ENCODE measurements at regions of chr5 and their contacts with region 1.

Region 1: DNA sequence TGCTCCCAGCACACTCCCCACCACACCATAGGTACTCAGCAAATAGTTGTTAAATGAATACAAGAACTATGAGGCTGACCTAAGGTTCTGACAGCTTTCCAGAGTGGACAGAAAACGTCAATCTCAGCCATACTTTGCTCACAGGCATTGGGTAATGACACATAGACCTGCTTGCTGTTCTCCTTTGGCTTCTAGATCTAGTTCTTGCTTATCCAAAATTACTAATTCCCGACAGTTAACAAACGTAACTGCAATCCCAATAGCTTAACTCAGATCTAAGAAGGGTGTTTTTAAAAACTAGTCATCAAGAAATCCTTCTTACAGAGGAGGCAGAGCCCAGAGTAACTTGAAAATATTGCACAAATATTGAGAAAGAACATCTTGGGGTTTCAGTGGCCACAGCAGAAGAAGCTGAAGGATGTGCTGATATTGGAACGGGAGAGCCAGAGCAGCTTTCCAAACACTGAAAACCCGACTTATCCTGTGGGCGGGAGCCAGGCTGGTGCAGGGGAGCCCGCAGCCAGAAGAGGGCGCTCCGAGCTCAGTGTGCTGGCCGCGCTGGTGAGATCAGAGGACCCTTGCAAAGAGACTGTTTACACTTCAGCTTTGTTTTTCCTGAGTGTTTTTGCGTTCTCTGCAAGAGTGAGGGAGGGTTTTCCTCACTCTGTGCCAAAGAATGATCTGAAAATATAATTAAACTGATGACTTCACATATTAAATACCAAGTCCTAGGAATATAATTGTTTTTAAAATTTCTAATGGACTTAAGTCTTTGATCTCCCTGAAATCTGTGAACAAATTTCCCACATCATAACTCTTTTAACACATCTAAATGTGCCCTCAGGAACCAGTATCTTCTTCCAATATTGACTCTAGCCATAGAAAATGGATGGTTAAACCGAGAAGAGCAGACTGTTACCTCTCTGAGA is 30.3 kb downstream of the FGF1 start:
- DNase-seq: peak; percentile 81
- ATAC-seq: peak; percentile 93
- H3K4me3 Mint-ChIP-seq: no peak overlapping the region
- H3K27ac Mint-ChIP-seq: no peak overlapping the region
- H3K4me1 Mint-ChIP-seq: no peaks in the 10 kb centered on the region
- H3K27me3 Mint-ChIP-seq: peaks cover 12% of the 10 kb centered on the region
- CTCF ChIP-seq: peak; percentile 97

Region 2: DNA sequence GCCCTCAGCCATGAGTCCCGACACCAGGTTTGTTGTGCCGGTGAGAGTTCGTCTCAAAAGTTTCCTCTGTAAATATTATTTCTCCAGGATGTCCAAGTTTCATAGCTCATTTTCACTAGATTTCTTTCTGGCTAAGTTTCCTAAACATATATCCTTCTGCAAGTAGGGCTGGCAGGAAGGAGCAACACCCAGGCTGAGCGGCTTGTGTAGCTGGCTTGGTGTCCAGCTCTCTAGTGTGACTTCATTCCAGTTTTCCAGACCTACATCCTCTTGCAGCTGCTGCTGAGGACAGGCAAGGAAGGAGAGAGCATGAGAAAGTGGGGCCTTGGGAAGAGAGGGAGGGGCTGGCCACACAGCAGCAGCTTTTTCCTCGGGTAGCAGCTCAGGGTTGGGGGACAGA is 50.0 kb before region 1 on chr5:
- CTCF ChIA-PET with region 1: interaction called, 36 read pairs
- POLR2A ChIA-PET with region 1: interaction called, 3 read pairs
- intact Hi-C with region 1: no loop called
- DNase-seq: no peak
- ATAC-seq: no peak
- H3K4me3 Mint-ChIP-seq: no peak overlapping the region
- H3K27ac Mint-ChIP-seq: no peak overlapping the region
- H3K4me1 Mint-ChIP-seq: no peaks in the 10 kb centered on the region
- H3K27me3 Mint-ChIP-seq: peaks cover 13% of the 10 kb centered on the region
- CTCF ChIP-seq: no peak

Region 3: DNA sequence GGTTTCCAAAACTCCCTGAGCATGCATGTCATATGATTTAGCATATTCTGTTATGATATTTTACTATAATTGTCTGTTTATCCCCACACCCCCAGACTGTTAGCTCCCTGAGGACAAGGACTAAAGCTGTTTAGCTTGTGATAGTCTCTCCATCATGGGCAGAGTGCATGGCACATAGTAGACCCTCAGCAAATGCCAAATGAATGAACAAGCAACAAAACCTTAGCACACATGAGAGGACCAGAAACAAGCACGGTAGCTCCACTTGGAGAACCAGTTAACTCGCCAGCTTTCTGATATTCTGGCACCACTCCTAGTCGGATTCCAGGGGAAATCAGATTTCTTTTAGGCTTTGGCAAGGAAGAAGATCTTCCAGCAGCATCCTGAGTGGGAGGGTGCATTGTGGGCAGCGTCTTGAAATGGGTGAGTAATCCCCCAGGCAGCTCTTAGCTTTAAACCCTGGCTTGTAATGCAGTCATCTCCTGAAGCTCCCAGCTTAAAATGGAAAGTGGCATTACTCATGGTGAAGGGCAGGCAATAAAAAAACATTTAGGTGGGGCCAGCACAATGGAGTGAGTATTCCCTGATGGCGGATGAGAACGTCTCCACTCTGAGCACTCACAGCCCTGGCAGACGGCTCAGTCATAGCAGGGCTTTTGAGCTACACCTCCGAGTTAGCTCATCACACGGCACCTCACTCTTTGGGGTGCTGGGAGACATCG is 10.8 kb before region 1 on chr5:
- CTCF ChIA-PET with region 1: interaction called, 72 read pairs
- POLR2A ChIA-PET with region 1: no interaction called
- intact Hi-C with region 1: no loop called
- DNase-seq: no peak
- ATAC-seq: no peak
- H3K4me3 Mint-ChIP-seq: no peak overlapping the region
- H3K27ac Mint-ChIP-seq: no peak overlapping the region
- H3K4me1 Mint-ChIP-seq: no peaks in the 10 kb centered on the region
- H3K27me3 Mint-ChIP-seq: peaks cover 2% of the 10 kb centered on the region
- CTCF ChIP-seq: no peak

Region 4: DNA sequence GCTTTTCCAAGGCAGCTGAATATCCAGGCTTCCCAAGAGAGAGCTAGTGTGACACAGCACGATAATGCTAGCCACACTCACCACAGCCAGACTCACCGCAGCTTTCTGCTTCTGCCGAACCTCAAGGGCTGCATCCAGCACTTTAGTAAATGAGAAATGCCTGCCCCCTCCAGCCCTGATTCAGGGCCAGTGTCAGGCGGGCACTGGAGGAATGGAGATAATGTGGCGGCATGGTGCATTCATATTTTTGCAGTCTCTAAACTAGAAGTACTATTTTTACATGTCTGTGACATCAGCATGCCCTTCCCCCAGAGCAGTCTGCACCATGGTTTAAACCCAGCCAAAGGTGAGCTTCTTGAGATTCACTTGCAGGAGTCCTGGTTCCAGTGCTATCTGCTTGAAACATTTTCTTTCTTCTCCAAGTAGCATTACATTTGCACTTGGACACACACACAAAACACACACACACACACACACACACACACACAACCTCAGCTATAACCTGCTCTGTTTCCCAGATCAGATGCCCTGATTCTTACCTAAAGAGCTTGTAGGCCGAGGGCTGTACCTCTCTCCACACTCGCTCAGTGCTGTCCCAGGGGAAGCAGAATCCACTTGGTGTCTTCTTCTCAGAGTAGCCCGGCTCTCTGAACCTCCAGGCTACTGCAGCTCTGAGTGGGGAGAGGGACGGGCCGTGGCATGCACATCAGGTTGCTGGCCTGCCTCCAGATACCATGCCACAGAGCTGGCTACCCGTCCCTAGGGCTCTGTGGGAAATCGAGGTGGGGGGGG is 30.0 kb after region 1 on chr5 and contains the start of gene FGF1:
- CTCF ChIA-PET with region 1: interaction called, 18 read pairs
- POLR2A ChIA-PET with region 1: no interaction called
- intact Hi-C with region 1: no loop called
- DNase-seq: no peak
- ATAC-seq: no peak
- H3K4me3 Mint-ChIP-seq: no peak within 1 kb of the TSS
- H3K27ac Mint-ChIP-seq: no peak within 1 kb of the TSS
- H3K4me1 Mint-ChIP-seq: no peaks in the 10 kb centered on the region
- H3K27me3 Mint-ChIP-seq: peaks cover 6% of the 10 kb centered on the region
- CTCF ChIP-seq: no peak
- total RNA-seq, gene FGF1: not detected

Region 5: GRCh38 chr5:142713121-142713706 is 57.6 kb after region 1 on chr5:
- CTCF ChIA-PET with region 1: interaction called, 28 read pairs
- POLR2A ChIA-PET with region 1: no interaction called
- intact Hi-C with region 1: no loop called
- DNase-seq: peak; percentile 92
- ATAC-seq: peak; percentile 97
- H3K4me3 Mint-ChIP-seq: peak overlapping the region; percentile 72
- H3K27ac Mint-ChIP-seq: peak overlapping the region; percentile 40
- H3K4me1 Mint-ChIP-seq: peaks cover 5% of the 10 kb centered on the region
- H3K27me3 Mint-ChIP-seq: no peaks in the 10 kb centered on the region
- CTCF ChIP-seq: peak; percentile 93

Region 6: DNA sequence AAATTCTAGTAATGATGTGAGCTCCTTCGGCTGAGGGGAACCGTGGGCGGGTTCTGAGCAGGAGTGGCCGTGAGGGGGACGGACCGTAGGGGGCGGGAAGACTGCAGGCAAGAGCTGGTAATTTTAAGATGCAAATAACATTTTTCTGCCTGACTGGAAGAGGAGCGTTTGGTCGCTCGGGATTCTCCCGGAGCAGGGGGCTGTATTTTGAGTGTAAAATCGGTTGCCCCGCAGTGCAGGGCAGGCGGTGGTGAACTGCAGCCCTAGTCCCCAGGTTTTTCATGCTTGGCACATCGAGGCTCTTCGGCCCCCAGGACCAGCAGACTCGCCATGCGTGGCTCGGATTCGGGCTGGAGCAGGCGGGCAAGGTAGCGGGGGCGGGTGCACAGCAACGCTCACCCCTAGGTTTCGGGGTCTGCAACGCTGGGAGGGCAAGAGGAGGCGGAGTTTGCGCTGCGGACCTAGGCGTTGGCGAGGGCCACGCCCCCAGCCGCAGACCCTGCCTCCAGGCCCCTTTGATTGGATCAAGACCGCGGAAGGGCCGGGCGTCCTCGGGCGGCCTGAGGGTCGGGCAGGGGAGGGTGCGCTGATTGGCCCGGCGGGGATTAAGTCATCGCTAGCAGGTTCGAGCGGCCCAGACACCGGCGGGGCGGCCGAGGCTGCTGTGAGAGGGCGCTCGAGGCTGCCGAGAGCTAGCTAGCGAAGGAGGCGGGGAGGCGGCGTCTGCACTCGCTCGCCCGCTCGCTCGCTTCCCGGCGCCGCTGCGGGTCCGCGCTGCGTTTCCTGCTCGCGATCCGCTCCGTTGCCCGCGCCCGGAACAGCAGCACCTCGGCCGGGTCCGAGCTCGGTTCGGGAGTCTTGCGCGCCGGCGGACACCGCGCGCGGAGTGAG is 114.4 kb after region 1 on chr5 and contains the start of gene ARHGAP26:
- CTCF ChIA-PET with region 1: no interaction called
- POLR2A ChIA-PET with region 1: no interaction called
- intact Hi-C with region 1: no loop called
- DNase-seq: peak; percentile 96
- ATAC-seq: peak; percentile 93
- H3K4me3 Mint-ChIP-seq: peak within 1 kb of the TSS; percentile 94
- H3K27ac Mint-ChIP-seq: peak within 1 kb of the TSS; percentile 89
- H3K4me1 Mint-ChIP-seq: peaks cover 36% of the 10 kb centered on the region
- H3K27me3 Mint-ChIP-seq: no peaks in the 10 kb centered on the region
- CTCF ChIP-seq: no peak
- total RNA-seq, gene ARHGAP26: 12.7 to 18.0 TPM

Region 7: DNA sequence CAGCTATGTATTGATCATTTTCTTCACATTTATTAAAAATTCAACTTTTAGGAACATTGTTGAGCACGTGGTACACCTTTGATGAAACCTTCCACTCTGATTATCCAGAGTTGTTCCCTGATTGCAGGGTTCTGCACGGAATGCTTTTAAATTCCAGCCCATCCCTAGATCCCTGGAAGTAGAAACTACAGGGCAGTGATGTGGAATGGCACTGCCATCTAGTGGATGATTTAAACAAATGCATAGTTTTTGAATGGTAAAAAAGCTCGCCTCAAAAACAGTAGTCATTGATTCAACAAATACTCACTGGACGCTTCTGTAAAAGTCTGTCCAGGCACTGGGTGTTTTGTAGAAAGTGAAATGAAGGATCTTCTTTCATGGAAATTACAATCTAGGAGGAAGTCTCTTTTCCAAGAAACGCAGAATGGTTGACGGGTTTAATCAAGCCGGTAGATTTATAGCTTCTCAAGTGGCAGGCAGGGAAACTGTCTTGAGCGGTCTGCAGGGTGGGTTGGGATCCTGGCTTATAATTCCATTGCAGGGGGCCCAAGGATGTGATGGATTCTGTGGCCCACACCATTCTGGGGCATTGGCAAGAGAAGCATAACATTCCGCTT is 233.0 kb after region 1 on chr5:
- CTCF ChIA-PET with region 1: interaction called, 28 read pairs
- POLR2A ChIA-PET with region 1: no interaction called
- intact Hi-C with region 1: loop called (anchors 5 kb)
- DNase-seq: no peak
- ATAC-seq: no peak
- H3K4me3 Mint-ChIP-seq: no peak overlapping the region
- H3K27ac Mint-ChIP-seq: no peak overlapping the region
- H3K4me1 Mint-ChIP-seq: peaks cover 8% of the 10 kb centered on the region
- H3K27me3 Mint-ChIP-seq: no peaks in the 10 kb centered on the region
- CTCF ChIP-seq: peak; percentile 93

Measured in activated CD8-positive, alpha-beta T cell treated with anti-CD3 and anti-CD28 coated beads for 36 hours (primary cell).